HEK293 (cell line): ENCODE measurements at regions of chr3 and their contacts with region 1.

Region 1: GRCh38 chr3:81723732-81724313 is 37.6 kb downstream of the GBE1 start:
- H3K4me3 ChIP-seq: no peak overlapping the region
- H3K27ac ChIP-seq: no peak overlapping the region
- H3K4me1 ChIP-seq: no peaks in the 10 kb centered on the region
- CTCF ChIP-seq: no peak

Region 2: GRCh38 chr3:81764665-81765064 is 40.8 kb after region 1 on chr3:
- CTCF ChIA-PET with region 1: interaction called, 10 read pairs
- POLR2A ChIA-PET with region 1: no interaction called
- H3K4me3 ChIP-seq: no peak overlapping the region
- H3K27ac ChIP-seq: no peak overlapping the region
- H3K4me1 ChIP-seq: no peaks in the 10 kb centered on the region
- CTCF ChIP-seq: no peak